Breast epithelium (tissue), 4 donors: ENCODE measurements at regions of chr12 and their contacts with region 1.

Region 1: DNA sequence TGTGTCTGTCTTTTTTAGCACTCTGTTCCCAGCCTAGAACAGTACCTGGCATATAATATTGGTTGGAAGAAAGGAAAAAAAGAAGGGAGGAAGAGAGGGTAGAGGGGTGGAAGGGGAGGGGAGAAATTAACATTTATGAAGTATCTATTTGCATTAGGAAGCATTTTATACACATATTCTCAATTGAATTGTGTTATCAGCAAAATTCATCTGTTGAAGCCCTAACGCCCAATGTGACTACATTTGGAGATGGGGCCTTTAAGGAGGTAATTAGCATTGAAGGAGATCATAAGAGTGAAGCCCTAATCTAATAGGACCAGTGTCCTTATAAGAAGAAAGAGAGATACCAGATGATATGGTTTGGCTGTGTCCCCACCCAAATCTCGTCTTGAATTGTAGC is 30.2 kb upstream of the FICD start:
- DNase-seq: no peak
- H3K4me3 ChIP-seq: no peak overlapping the region
- H3K27ac ChIP-seq: no peak overlapping the region
- H3K4me1 ChIP-seq: no peaks in the 10 kb centered on the region
- H3K27me3 ChIP-seq: no peaks in the 10 kb centered on the region
- CTCF ChIP-seq: no peak
- POLR2A ChIP-seq: no peak

Region 2: DNA sequence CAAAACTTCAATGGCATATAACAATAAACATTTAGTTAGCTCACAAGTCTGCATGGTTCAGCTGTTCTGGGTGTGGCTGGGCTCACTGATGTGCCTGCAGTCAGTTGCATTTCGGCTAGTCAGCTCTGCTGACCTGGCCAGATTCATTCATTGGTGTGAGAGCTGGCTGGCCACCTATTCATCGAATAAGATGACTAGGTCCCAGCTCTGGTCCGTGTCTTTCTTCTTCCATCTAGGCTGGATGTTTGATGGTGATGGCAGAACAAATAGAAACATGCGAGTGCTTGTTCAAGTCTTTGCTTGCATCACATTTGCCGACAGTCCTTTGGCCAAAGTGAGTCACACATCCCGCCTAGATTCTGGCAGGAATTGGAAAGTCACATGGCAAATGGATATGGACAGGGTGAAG is 1188.2 kb before region 1 on chr12:
- intact Hi-C with region 1: loop called (anchors 5 kb)
- DNase-seq: no peak
- H3K4me3 ChIP-seq: no peak overlapping the region
- H3K27ac ChIP-seq: no peak overlapping the region
- H3K4me1 ChIP-seq: no peaks in the 10 kb centered on the region
- H3K27me3 ChIP-seq: no peaks in the 10 kb centered on the region
- CTCF ChIP-seq: no peak
- POLR2A ChIP-seq: no peak

Region 3: DNA sequence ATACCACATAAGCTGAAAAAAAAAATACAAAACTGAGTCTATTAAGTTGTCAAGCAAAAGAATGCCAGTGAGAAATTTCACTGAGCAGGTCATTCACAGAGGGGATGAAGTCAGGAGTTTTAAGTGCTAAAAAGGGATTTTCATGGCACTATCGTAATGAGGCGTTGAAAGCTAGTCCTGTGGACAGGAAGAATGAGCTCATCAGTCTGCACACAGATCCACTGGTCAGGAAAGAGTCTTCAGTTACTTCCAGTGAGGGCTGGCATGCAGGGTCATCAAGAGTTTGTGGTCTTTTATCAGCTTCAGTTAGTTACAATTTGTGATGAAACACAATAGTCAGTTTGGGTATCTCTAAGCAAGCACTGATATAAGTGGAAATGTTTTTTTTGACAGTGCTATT is 443.9 kb before region 1 on chr12:
- intact Hi-C with region 1: no loop called
- DNase-seq: no peak
- H3K4me3 ChIP-seq: no peak overlapping the region
- H3K27ac ChIP-seq: no peak overlapping the region
- H3K4me1 ChIP-seq: no peaks in the 10 kb centered on the region
- H3K27me3 ChIP-seq: no peaks in the 10 kb centered on the region
- CTCF ChIP-seq: no peak
- POLR2A ChIP-seq: no peak

Region 4: DNA sequence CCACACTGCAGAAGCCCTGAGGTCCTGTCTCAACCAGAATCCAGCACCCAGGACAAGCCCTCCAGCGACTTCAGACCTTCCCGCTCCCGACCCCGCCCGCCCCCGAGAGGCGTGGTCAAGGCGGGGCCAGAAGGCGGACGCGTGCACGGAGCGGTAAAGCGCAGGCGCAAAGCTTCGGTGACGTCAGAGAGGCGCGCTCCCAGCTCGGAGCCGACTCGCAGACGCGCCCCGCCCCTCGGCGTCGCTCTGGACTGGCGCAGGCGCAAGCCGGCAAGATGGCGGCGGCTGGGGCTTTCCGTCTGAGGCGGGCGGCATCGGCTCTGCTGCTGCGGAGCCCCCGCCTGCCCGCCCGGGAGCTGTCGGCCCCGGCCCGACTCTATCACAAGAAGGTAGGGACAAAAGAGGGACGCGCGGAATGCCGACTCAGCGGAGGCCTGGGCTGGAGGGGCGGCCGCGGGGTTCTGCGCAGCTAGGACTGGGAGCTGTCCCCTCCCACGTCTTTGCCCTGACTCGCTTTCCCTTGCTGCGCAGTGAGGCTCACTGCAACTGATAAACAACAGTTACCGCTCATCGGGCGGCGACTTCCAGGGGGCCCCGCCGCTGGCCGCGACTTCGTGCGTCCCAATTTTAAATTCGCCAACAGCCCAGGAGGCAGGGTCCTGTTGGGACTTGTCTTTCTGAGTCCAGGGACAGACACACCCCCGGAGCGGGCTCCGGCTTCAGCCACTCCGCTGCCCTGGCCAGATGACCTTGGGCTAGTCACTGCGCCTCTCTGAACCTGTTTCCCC is 77.7 kb after region 1 on chr12 and contains the start of gene ISCU:
- intact Hi-C with region 1: no loop called
- DNase-seq: peak; percentile 96 to 98
- H3K4me3 ChIP-seq: peak within 1 kb of the TSS; percentile 93 to 100 (median 98)
- H3K27ac ChIP-seq: peak within 1 kb of the TSS; percentile 91 to 95
- H3K4me1 ChIP-seq: peaks cover 0 to 6% of the 10 kb centered on the region in 2 donors
- H3K27me3 ChIP-seq: no peaks in the 10 kb centered on the region
- CTCF ChIP-seq: no peak
- POLR2A ChIP-seq: peak; percentile 56
- total RNA-seq, gene ISCU: 220 to 328 (median 227) TPM

Region 5: GRCh38 chr12:108745641-108746040 is 260.8 kb after region 1 on chr12:
- intact Hi-C with region 1: loop called (anchors 5 kb)
- DNase-seq: no peak
- H3K4me3 ChIP-seq: no peak overlapping the region
- H3K27ac ChIP-seq: no peak overlapping the region
- H3K4me1 ChIP-seq: no peaks in the 10 kb centered on the region
- H3K27me3 ChIP-seq: no peaks in the 10 kb centered on the region
- CTCF ChIP-seq: no peak
- POLR2A ChIP-seq: no peak